Common myeloid progenitor, CD34-positive (primary cell): ENCODE measurements at regions of chr3 and their contacts with region 1.

Region 1: GRCh38 chr3:56238299-56238698 is 230.0 kb downstream of the ERC2 start:
- DNase-seq: no peak
- H3K4me3 ChIP-seq: no peak overlapping the region
- H3K27ac ChIP-seq: no peak overlapping the region
- H3K4me1 ChIP-seq: no peaks in the 10 kb centered on the region
- H3K27me3 ChIP-seq: peaks cover 0 to 1% (median 0%) of the 10 kb centered on the region in 5 experiments

Region 2: DNA sequence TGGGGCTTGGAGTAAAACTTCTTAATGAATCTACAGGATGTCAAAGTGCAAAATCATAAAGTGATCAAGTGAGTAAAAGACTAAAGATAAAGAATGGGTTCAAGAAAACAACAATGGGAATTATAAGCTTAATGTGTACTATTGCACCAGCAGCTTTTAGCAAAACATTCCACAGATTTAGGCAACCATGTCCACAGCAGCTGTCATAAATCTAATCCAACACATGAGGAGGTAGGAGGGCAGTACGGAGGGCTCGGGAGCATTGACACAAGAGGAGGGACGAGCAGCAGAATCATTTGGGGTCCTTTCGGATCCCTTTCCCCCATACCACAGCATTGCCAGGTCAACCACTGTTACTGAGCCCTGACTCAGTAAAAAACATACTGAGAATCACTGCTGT is 286.9 kb before region 1 on chr3:
- CTCF ChIA-PET with region 1: no interaction called
- POLR2A ChIA-PET with region 1: no interaction called
- DNase-seq: no peak
- H3K4me3 ChIP-seq: no peak overlapping the region
- H3K27ac ChIP-seq: no peak overlapping the region
- H3K4me1 ChIP-seq: no peaks in the 10 kb centered on the region
- H3K27me3 ChIP-seq: no peaks in the 10 kb centered on the region

Region 3: GRCh38 chr3:56222866-56223265 is 15.4 kb before region 1 on chr3:
- CTCF ChIA-PET with region 1: no interaction called
- POLR2A ChIA-PET with region 1: no interaction called
- DNase-seq: no peak
- H3K4me3 ChIP-seq: no peak overlapping the region
- H3K27ac ChIP-seq: no peak overlapping the region
- H3K4me1 ChIP-seq: no peaks in the 10 kb centered on the region
- H3K27me3 ChIP-seq: peaks cover 0 to 5% (median 0%) of the 10 kb centered on the region in 5 experiments

Region 4: GRCh38 chr3:56254835-56255234 is 16.5 kb after region 1 on chr3:
- CTCF ChIA-PET with region 1: interaction called, 10 read pairs
- POLR2A ChIA-PET with region 1: no interaction called
- DNase-seq: peak in 2 of 3 donors; percentile 2 to 11
- H3K4me3 ChIP-seq: no peak overlapping the region
- H3K27ac ChIP-seq: no peak overlapping the region
- H3K4me1 ChIP-seq: no peaks in the 10 kb centered on the region
- H3K27me3 ChIP-seq: peaks cover 0 to 4% (median 0%) of the 10 kb centered on the region in 5 experiments